ENCODE measurements at regions of chr21 and their contacts with region 1.

Region 1: DNA sequence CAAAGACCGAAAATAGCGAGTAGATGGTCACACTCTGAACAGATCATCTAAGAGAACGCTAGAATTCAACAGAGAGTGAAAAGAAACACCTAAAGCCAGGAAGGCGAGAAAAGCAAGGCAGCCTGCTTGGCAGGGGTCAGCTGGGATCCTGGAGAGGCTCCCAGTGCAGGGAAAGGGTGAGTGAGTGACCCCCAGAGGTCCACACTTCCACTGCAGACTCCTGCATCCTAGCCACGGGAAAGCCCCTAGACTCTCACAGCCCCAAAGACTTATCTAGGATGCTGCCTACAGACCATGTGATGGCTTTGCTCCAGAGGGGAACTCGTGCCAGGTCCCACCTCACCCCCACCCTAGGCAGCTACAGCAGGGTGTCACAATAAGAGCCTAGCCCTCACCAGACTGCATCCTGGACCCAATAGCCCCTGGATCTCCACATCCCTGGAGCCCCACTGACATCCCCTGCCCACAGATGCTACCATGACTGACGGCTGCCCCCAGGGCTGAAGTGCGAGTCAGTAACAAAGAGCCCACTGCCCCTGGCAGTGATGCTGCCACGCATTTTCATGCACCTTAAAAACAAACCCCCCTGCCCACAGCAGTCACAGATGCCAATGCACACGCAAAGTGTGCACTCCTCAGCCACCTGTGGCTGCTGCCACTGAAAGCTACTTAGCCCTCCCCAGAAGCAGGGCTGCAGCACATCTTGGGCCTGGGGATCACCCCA is 62.2 kb downstream of the PSMG1 start:
- DNase-seq: no peak
- H3K4me3 ChIP-seq: no peak overlapping the region
- CTCF ChIP-seq: no peak

Region 2: GRCh38 chr21:39033878-39034602 is 87.0 kb before region 1 on chr21:
- in situ Hi-C with region 1: loop called (anchors 5 kb)
- DNase-seq: no peak
- H3K4me3 ChIP-seq: no peak overlapping the region
- CTCF ChIP-seq: no peak